Activated CD8-positive, alpha-beta T cell treated with anti-CD3 and anti-CD28 coated beads, Interleukin-2, amount 10 ng/mL, durations not matched to agents 7 days and 5 days (primary cell): ENCODE measurements at regions of chr14 and their contacts with region 1.

Region 1: GRCh38 chr14:89915114-89915878 is 39.2 kb downstream of the EFCAB11 start:
- DNase-seq: peak; percentile 73
- ATAC-seq: no peak
- H3K4me3 Mint-ChIP-seq: no peak overlapping the region
- H3K27ac Mint-ChIP-seq: no peak overlapping the region
- H3K4me1 Mint-ChIP-seq: peaks cover 4% of the 10 kb centered on the region
- H3K27me3 Mint-ChIP-seq: peaks cover 17% of the 10 kb centered on the region

Region 2: DNA sequence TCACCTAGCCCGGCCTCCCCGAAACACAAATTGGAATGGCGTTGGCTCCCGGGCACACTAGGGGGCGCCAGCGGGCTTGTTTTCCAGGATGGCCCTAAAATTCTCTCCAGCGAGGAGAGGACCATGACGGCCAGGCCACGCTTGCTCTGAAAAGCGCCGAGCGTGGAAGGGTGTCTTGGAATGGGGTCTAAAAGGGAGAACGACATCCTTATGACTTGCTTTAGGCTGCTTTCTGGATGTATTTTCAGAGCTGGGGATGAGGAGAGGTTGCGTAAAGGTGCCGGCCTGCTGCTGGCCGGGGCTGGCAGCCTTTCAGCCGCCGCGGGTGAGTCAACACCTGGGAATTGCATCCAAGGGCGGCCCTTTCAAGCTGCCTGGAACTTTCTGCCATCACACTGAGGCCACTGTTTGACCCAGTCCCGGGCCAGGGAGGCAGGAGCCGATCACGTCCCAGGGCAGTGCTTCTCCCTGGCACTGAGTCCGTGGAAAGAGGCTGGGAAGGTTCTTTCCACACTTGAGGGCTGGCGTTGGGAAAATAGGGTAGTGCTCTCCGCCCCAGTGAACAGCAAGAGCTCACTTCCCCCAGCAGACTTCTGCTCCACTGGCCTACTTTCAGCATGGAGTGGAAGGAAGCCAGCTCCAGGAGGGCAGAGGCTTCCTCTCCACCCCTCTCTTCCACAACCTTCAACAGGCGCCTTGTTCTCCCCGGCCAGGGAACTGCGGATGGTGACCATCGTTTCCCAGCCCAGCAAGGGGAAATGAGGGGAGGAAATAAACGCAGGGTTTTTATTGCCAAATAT is 874.6 kb before region 1 on chr14:
- CTCF ChIA-PET with region 1: interaction called, 12 read pairs
- POLR2A ChIA-PET with region 1: no interaction called
- DNase-seq: peak; percentile 85
- ATAC-seq: peak; percentile 88
- H3K4me3 Mint-ChIP-seq: peak overlapping the region; percentile 40
- H3K27ac Mint-ChIP-seq: peak overlapping the region; percentile 59
- H3K4me1 Mint-ChIP-seq: peaks cover 12% of the 10 kb centered on the region
- H3K27me3 Mint-ChIP-seq: peaks cover 19% of the 10 kb centered on the region

Region 3: DNA sequence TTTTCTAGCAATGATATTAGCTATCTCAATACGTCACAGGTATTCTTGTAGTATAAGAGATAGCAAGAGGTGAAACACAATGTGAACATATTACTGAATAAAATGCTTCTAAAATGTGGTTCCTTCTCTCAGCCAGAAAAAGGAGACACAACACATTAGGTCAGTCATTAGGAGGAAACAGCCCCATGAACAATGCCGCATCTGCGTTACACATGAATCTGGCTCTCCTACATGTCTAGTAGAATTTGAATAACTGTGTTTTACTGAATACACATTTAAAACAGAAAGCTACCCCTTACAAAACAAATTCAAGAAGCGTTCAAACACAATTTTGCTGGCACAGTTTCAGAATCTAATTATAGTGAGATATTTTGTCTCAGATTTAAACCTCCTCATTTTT is 12.4 kb before region 1 on chr14:
- CTCF ChIA-PET with region 1: no interaction called
- POLR2A ChIA-PET with region 1: no interaction called
- DNase-seq: no peak
- ATAC-seq: no peak
- H3K4me3 Mint-ChIP-seq: no peak overlapping the region
- H3K27ac Mint-ChIP-seq: no peak overlapping the region
- H3K4me1 Mint-ChIP-seq: peaks cover 11% of the 10 kb centered on the region
- H3K27me3 Mint-ChIP-seq: peaks cover 2% of the 10 kb centered on the region